Activated T-helper 1 cell treated with anti-CD3 and anti-CD28 coated beads, Interleukin-12 subunit alpha, Interleukin-12 subunit beta, Interleukin-2, Interleukin-4 antibody, amounts not matched to agents 30 ng/mL and 10 ng/mL and 1 ng/mL, durations not matched to agents 14 hours and 24 hours and 36 hours (primary cell): ENCODE measurements at regions of chr1 and their contacts with region 1.

Region 1: DNA sequence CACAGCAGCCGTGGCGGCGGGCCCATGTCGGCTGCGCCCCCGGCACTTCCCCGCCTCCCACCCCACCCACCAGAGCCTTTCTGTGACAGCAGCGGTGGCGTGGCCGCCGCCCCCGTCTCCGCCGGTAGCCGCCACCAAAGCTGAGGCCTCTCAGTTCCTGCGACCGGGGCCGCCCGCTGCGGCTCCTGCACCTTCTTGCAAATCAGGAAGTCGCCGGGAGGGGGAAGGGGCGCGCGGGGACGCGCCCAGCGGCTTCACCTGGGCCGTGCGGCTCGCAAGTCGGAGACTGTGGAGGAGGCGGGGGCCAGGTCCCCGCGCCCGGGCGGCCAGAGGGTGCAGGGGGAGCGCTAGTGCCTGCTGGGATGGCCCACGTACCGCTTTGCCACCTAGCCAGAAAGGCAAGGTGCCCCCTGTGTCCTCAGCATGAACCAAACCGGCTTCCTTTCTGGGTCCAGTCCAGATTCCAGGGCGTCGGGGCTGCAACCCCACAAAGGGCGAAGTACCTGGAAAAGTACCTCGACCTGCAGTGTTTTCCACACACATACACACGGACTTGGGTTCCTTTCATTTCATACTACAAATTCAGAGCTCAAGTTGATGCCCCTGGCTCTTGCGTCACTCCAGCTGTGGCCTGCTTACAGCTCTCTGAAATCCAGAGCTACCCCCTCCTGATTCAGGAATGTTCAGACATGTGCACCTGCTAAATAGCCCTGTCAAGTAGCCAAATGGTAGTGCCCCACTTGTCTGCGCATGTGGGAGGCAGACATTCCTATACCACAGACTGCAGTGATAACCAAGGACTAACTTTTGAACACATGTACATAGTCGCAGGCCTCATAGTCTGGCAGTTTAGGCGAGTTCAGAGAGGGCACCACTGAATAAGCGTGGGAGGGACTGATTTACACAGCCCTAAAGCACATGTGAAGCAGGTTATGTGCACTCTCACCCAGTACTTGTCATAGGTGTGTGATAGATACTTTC is at the start of gene DENND1B:
- DNase-seq: peak; percentile 80
- H3K4me3 Mint-ChIP-seq: peak within 1 kb of the TSS; percentile 85
- H3K27ac Mint-ChIP-seq: peak within 1 kb of the TSS; percentile 95
- H3K4me1 Mint-ChIP-seq: peaks cover 72% of the 10 kb centered on the region
- H3K27me3 Mint-ChIP-seq: no peaks in the 10 kb centered on the region
- total RNA-seq, gene DENND1B: 15.3 and 16.5 TPM in 2 replicates

Region 2: GRCh38 chr1:197146197-197146889 is 629.2 kb before region 1 on chr1 and contains the start of gene ASPM:
- intact Hi-C with region 1: loop called (anchors 10 kb)
- DNase-seq: peak; percentile 93
- H3K4me3 Mint-ChIP-seq: peak within 1 kb of the TSS; percentile 86
- H3K27ac Mint-ChIP-seq: peak within 1 kb of the TSS; percentile 93
- H3K4me1 Mint-ChIP-seq: peaks cover 29% of the 10 kb centered on the region
- H3K27me3 Mint-ChIP-seq: no peaks in the 10 kb centered on the region
- total RNA-seq, gene ASPM: 26.8 and 27.5 TPM in 2 replicates

Region 3: DNA sequence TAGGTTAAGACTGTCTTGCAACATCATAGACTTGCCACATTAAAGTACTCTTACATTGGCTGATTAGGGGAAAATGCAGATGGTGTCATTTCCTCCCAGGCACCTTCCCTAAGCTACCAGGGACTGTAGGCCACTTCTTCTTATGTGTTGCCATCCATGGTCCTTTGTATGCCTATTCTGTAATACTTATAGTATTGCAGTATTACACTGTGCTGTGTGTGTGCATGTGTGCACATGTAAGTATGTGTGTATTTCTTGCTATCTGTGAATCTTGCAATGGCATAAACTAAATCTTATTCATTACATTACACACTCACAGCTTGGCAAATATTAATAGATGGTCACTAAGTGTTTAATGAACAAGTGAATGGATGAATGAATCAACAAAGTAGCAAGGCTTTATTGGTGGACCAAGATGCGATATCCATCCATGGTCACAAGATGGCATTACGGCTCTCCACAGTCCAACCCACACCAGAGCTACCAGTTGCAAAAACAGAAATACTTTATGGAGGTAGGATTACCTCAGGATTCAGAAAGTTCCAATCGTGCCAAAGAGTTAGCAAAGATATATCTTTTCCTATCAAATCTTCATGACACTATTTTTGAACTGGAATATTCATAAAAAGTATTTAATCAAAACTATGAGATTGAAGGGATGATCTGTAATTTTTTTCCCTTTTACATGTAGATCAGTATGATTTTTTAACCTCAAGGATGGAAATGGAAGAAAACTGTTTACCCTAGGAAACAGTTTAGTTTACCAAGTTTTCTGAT is 160.5 kb before region 1 on chr1:
- intact Hi-C with region 1: loop called (anchors 5 kb)
- DNase-seq: no peak
- H3K4me3 Mint-ChIP-seq: no peak overlapping the region
- H3K27ac Mint-ChIP-seq: no peak overlapping the region
- H3K4me1 Mint-ChIP-seq: no peaks in the 10 kb centered on the region
- H3K27me3 Mint-ChIP-seq: no peaks in the 10 kb centered on the region

Region 4: GRCh38 chr1:197675583-197676208 is 99.9 kb before region 1 on chr1:
- intact Hi-C with region 1: no loop called
- DNase-seq: no peak
- H3K4me3 Mint-ChIP-seq: no peak overlapping the region
- H3K27ac Mint-ChIP-seq: no peak overlapping the region
- H3K4me1 Mint-ChIP-seq: peaks cover 6% of the 10 kb centered on the region
- H3K27me3 Mint-ChIP-seq: no peaks in the 10 kb centered on the region

Region 5: DNA sequence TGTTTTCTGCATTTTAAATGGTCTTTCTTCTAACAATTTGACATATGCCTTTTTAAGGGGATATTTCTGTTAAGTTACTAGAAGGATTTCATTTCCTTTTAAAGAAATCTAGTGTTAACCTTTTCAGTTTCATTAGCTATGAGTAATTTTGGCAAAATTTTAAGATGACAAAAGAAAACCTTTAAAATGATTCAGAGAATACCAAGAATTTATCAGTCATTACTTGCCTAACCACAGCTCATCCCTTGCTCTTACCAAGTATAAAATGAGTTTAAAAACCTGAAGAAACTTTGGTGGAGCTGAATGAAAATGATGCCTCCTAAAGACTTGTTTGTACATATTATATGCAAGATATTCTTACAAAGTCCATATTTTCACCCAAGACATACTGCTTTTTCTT is 482.9 kb after region 1 on chr1:
- intact Hi-C with region 1: loop called (anchors 1 kb)
- DNase-seq: no peak
- H3K4me3 Mint-ChIP-seq: peak overlapping the region; percentile 11
- H3K27ac Mint-ChIP-seq: peak overlapping the region; percentile 78
- H3K4me1 Mint-ChIP-seq: peaks cover 50% of the 10 kb centered on the region
- H3K27me3 Mint-ChIP-seq: no peaks in the 10 kb centered on the region

Region 6: DNA sequence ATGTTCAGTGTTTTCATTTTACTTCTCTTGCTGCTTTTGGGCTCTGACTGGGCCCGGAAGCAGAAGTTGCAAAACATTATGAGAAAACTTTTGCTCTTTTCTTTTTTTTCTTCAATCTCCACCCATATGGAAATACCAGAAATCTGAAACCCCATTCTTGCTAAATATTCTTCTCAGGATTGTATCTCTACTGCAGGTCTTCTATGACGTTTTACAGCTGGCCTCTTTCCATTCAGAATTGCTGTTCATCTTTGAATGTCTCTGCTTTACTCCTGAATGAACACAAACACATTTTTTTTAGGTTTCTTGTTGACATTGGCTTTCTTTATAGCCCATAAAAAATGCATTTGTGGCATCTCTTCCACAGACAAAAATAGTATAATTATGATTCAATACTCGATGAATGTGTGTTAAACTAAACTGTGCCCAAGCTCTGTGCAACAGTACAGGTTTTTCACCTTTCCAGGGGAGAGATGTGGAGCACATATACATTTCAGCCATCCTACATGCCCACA is 882.0 kb after region 1 on chr1:
- intact Hi-C with region 1: loop called (anchors 5 kb)
- DNase-seq: no peak
- H3K4me3 Mint-ChIP-seq: peak overlapping the region; percentile 63
- H3K27ac Mint-ChIP-seq: peak overlapping the region; percentile 84
- H3K4me1 Mint-ChIP-seq: peaks cover 68% of the 10 kb centered on the region
- H3K27me3 Mint-ChIP-seq: no peaks in the 10 kb centered on the region

Region 7: GRCh38 chr1:198880818-198881597 is 1105.4 kb after region 1 on chr1:
- intact Hi-C with region 1: loop called (anchors 5 kb)
- DNase-seq: no peak
- H3K4me3 Mint-ChIP-seq: no peak overlapping the region
- H3K27ac Mint-ChIP-seq: peak overlapping the region; percentile 71
- H3K4me1 Mint-ChIP-seq: peaks cover 59% of the 10 kb centered on the region
- H3K27me3 Mint-ChIP-seq: no peaks in the 10 kb centered on the region

Region 8: DNA sequence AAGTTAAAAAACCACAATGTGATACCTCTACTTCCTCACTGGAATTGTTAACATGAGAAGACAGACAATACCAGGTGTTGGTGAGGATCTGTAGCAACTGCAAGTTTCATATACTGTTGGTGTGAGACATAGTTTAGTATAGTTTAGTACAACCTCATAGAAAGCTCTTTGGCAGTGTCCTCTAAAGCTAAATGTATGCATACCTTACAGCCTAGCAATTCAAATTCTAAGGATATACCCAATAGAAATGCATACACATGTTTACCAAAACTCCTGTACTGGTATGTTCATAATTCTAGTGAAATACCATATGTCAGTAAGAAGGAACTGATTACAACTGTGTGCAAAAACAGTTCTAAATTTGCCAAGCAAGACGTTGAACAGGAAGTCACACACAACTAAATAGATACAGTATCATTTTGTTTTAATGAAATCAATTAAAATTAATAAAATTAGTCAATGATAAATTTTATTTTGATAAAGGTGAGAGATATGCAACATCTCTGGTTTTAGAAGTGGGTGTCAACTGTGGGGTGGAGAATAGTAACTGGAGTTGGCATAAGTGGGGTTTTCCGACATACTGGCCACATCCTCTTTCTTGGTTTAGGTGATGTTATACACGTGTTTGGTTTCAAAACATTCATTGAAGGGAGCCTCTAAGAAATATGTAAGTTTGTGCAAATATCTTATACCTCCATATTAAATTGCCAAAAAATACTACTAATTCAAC is 1314.0 kb after region 1 on chr1:
- intact Hi-C with region 1: loop called (anchors 5 kb)
- DNase-seq: peak; percentile 57
- H3K4me3 Mint-ChIP-seq: peak overlapping the region; percentile 32
- H3K27ac Mint-ChIP-seq: peak overlapping the region; percentile 71
- H3K4me1 Mint-ChIP-seq: peaks cover 53% of the 10 kb centered on the region
- H3K27me3 Mint-ChIP-seq: no peaks in the 10 kb centered on the region